HepG2 (cell line): ENCODE measurements at regions of chr11 and their contacts with region 1.

Region 1: GRCh38 chr11:111454561-111455192 is 57.5 kb downstream of the BTG4 start:
- DNase-seq: peak; percentile 42
- ATAC-seq: peak; percentile 77
- H3K4me3 ChIP-seq: peak overlapping the region; percentile 31 to 70 (median 37); a peak in 5 of 6 replicates
- H3K27ac ChIP-seq: no peak overlapping the region
- H3K4me1 ChIP-seq: peaks cover 30% of the 10 kb centered on the region
- H3K27me3 ChIP-seq: peaks cover 9 to 46% of the 10 kb centered on the region in 2 experiments; a peak in 4 of 5 replicates
- CTCF ChIP-seq: peak; percentile 64
- EP300 ChIP-seq: no peak
- POLR2A ChIP-seq: no peak
- RAD21 ChIP-seq: no peak

Region 2: GRCh38 chr11:111565114-111565720 is 110.5 kb after region 1 on chr11:
- CTCF ChIA-PET with region 1: interaction called, 3 read pairs
- POLR2A ChIA-PET with region 1: no interaction called
- in situ Hi-C with region 1: no loop called
- intact Hi-C with region 1: loop called (anchors 5 kb)
- DNase-seq: peak; percentile 39
- ATAC-seq: 0 out of 3 replicates have a peak, but pooled peaks have one; percentile 14
- H3K4me3 ChIP-seq: no peak overlapping the region
- H3K27ac ChIP-seq: no peak overlapping the region
- H3K4me1 ChIP-seq: peaks cover 62% of the 10 kb centered on the region
- H3K27me3 ChIP-seq: no peaks in the 10 kb centered on the region
- CTCF ChIP-seq: peak; percentile 75
- EP300 ChIP-seq: no peak
- POLR2A ChIP-seq: no peak
- RAD21 ChIP-seq: peak; percentile 49; the same call in 1 of the 2 replicates

Region 3: GRCh38 chr11:111586388-111586831 is 131.7 kb after region 1 on chr11:
- CTCF ChIA-PET with region 1: no interaction called
- POLR2A ChIA-PET with region 1: no interaction called
- in situ Hi-C with region 1: no loop called
- intact Hi-C with region 1: loop called (anchors 5 kb)
- DNase-seq: peak; percentile 51
- ATAC-seq: peak; percentile 65
- H3K4me3 ChIP-seq: no peak overlapping the region
- H3K27ac ChIP-seq: no peak overlapping the region
- H3K4me1 ChIP-seq: peaks cover 38% of the 10 kb centered on the region
- H3K27me3 ChIP-seq: no peaks in the 10 kb centered on the region
- CTCF ChIP-seq: peak; percentile 72
- EP300 ChIP-seq: no peak
- POLR2A ChIP-seq: no peak
- RAD21 ChIP-seq: peak; percentile 50; the same call in 1 of the 2 replicates